ENCODE measurements at regions of chr7 and their contacts with region 1.

Region 1: GRCh38 chr7:39566023-39566921 is at the start of gene YAE1:
- DNase-seq: peak; percentile 63 to 81 (median 75)
- ATAC-seq: peak; percentile 95
- H3K4me3 ChIP-seq: peak within 1 kb of the TSS; percentile 88
- H3K4me3 Mint-ChIP-seq: peak within 1 kb of the TSS; percentile 98 to 100 (median 99)
- H3K27ac ChIP-seq: peak within 1 kb of the TSS; percentile 81
- H3K27ac Mint-ChIP-seq: peak within 1 kb of the TSS; percentile 93 to 99 (median 96)
- H3K4me1 ChIP-seq: peaks cover 7 to 11% of the 10 kb centered on the region in 2 donors
- H3K4me1 Mint-ChIP-seq: peaks cover 13 to 50% (median 25%) of the 10 kb centered on the region in 7 donors
- H3K27me3 ChIP-seq: no peaks in the 10 kb centered on the region
- H3K27me3 Mint-ChIP-seq: peaks cover 0 to 15% (median 0%) of the 10 kb centered on the region in 5 donors
- total RNA-seq, gene YAE1: 10.2 to 34.2 (median 15.3) TPM

Region 2: DNA sequence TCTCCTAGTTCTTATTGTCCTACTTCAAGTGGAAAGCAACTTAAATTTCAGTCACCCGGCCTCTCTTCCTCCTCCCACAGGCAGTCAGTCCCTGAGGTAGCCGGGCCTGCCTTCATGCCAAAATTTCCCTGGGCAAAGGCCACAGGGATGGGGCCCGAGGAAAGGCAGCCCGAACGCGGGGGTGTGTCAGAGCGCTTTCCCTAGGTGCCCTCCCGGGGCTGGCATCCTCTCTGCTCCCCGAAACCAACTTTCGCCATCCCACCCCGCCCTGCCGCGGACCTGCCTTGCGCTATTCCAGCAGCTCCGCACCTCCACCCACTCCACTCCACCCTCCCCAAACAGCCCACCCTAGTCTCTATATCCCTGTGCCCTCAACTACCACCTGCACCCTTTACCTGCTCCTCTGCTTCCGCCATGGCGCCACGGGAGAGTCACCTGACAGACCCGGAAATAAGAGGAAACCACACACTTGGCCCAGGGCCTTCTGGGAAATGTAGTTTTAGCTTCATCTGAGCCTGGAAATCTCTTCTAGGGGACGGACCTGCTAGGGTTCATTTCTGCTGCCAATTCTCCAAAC is 657.4 kb before region 1 on chr7 and contains the start of gene VPS41:
- CTCF ChIA-PET with region 1: no interaction called
- POLR2A ChIA-PET with region 1: no interaction called
- intact Hi-C with region 1: loop called (anchors 2 to 5 kb)
- DNase-seq: peak; percentile 42 to 89 (median 85)
- ATAC-seq: peak; percentile 99
- H3K4me3 ChIP-seq: peak within 1 kb of the TSS; percentile 79
- H3K4me3 Mint-ChIP-seq: peak within 1 kb of the TSS; percentile 92 to 99 (median 97)
- H3K27ac ChIP-seq: peak within 1 kb of the TSS; percentile 72
- H3K27ac Mint-ChIP-seq: peak within 1 kb of the TSS; percentile 82 to 97 (median 91)
- H3K4me1 ChIP-seq: peaks cover 3 to 7% of the 10 kb centered on the region in 2 donors
- H3K4me1 Mint-ChIP-seq: peaks cover 17 to 41% (median 37%) of the 10 kb centered on the region in 7 donors
- H3K27me3 ChIP-seq: no peaks in the 10 kb centered on the region
- H3K27me3 Mint-ChIP-seq: peaks cover 0 to 5% (median 0%) of the 10 kb centered on the region in 5 donors
- total RNA-seq, gene VPS41: 37.1 to 65.0 (median 64.5) TPM

Region 3: GRCh38 chr7:39539816-39540215 is 26.5 kb before region 1 on chr7:
- CTCF ChIA-PET with region 1: no interaction called
- POLR2A ChIA-PET with region 1: no interaction called
- intact Hi-C with region 1: no loop called
- DNase-seq: no peak
- ATAC-seq: no peak
- H3K4me3 ChIP-seq: no peak overlapping the region
- H3K4me3 Mint-ChIP-seq: no peak overlapping the region
- H3K27ac ChIP-seq: no peak overlapping the region
- H3K27ac Mint-ChIP-seq: no peak overlapping the region
- H3K4me1 ChIP-seq: no peaks in the 10 kb centered on the region
- H3K4me1 Mint-ChIP-seq: no peaks in the 10 kb centered on the region
- H3K27me3 ChIP-seq: no peaks in the 10 kb centered on the region
- H3K27me3 Mint-ChIP-seq: peaks cover 0 to 9% (median 6%) of the 10 kb centered on the region in 5 donors

Region 4: DNA sequence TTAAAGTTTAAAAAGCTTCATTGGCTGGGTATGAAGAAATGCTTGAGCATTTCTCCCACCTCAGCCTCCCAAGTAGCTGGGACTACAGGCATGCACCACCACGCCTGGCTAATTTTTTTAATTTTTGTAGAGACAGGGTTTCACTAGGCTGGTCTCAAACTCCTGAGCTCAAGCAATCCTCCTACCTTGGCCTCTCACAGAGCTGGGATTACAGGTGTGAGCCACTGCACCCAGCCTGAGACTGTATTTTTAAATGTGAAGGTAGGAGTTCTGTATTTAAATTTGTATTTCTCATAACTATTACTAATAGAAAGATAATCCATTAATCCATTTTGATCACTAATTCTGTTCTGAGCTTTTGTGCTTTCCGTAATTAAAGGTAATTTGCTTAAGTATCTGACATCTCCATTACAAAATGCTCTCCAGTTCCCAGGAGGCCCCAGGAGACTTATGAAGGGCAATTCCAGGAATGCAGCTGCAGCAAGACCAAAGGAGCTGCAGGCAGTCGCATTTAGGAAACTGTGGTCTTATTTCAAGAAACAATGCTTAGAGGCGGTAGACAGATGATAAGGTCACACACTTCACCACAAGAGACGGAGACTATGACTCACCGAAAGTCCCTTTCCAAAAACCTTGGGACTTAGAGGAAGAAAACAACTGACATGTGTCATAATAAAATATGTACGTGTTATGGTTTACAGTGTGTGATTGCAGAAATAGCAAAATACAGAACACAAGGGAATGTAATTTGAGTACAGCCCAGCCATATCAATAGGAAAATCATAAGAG is 23.2 kb after region 1 on chr7:
- CTCF ChIA-PET with region 1: no interaction called
- POLR2A ChIA-PET with region 1: no interaction called
- intact Hi-C with region 1: loop called in 1 of 2 experiments (anchors 1 kb)
- DNase-seq: peak in 8 of 9 donors; percentile 37 to 85 (median 60)
- ATAC-seq: peak; percentile 94
- H3K4me3 ChIP-seq: no peak overlapping the region
- H3K4me3 Mint-ChIP-seq: peak overlapping the region in 6 of 10 donors; percentile 19 to 78 (median 52)
- H3K27ac ChIP-seq: no peak overlapping the region
- H3K27ac Mint-ChIP-seq: peak overlapping the region in 8 of 9 donors; percentile 55 to 90 (median 77)
- H3K4me1 ChIP-seq: peaks cover 5 to 15% of the 10 kb centered on the region in 2 donors
- H3K4me1 Mint-ChIP-seq: peaks cover 10 to 54% (median 26%) of the 10 kb centered on the region in 7 donors
- H3K27me3 ChIP-seq: no peaks in the 10 kb centered on the region
- H3K27me3 Mint-ChIP-seq: no peaks in the 10 kb centered on the region

Region 5: DNA sequence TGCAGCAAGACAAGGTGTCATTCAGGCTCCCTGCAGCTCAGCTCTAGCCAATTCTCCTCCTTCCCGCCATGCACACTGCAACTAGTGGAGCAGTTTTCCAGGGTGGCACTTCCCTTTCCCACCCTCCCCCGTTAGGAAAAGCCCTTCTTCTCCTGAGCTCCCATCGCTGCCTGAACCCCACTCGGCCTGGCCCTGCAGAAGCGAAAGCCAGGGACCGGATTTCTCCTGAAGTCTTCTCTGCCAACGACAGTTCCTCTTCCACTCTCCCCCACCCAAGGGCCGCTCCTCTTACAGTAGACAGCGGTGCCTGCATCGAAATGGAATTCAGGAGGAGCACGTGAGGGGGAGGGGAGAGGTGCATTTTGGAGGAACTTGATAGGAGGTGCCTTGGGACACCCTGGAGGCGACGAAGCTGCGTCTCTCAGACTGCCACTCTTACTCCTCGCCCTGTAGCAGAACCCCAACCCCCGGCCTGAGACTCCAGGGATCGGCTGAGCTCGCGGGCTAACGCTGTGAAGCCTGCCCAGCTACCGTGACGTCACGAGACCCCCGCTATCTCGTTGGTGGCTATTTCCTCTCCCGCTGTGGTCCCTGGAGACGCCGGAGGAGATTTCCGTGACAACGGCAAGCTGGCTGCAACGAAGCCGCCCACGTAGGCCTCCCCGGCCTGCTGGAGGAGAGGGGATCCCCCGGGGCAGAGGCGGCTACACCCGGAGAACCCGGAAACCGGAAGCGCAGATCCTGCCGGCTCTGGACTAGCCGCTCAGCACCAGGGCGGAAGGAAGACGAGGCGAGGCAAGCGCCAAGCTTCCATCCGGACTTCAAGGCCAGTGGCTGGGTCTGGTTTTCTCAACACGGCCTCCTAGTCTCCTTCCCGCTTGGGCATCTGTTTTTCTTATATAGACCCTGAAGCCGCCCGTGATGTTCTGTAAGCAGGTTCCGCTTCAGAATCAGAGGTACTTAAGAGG is 166.8 kb after region 1 on chr7:
- CTCF ChIA-PET with region 1: no interaction called
- POLR2A ChIA-PET with region 1: interaction called, 3 read pairs
- intact Hi-C with region 1: loop called (anchors 1 kb)
- DNase-seq: peak; percentile 80 to 96 (median 91)
- ATAC-seq: peak; percentile 95
- H3K4me3 ChIP-seq: peak overlapping the region; percentile 83
- H3K4me3 Mint-ChIP-seq: peak overlapping the region; percentile 78 to 95 (median 92)
- H3K27ac ChIP-seq: peak overlapping the region; percentile 82
- H3K27ac Mint-ChIP-seq: peak overlapping the region; percentile 93 to 98 (median 96)
- H3K4me1 ChIP-seq: peaks cover 11 to 27% of the 10 kb centered on the region in 2 donors
- H3K4me1 Mint-ChIP-seq: peaks cover 13 to 46% (median 40%) of the 10 kb centered on the region in 7 donors
- H3K27me3 ChIP-seq: no peaks in the 10 kb centered on the region
- H3K27me3 Mint-ChIP-seq: peaks cover 0 to 9% (median 0%) of the 10 kb centered on the region in 5 donors

Region 6: DNA sequence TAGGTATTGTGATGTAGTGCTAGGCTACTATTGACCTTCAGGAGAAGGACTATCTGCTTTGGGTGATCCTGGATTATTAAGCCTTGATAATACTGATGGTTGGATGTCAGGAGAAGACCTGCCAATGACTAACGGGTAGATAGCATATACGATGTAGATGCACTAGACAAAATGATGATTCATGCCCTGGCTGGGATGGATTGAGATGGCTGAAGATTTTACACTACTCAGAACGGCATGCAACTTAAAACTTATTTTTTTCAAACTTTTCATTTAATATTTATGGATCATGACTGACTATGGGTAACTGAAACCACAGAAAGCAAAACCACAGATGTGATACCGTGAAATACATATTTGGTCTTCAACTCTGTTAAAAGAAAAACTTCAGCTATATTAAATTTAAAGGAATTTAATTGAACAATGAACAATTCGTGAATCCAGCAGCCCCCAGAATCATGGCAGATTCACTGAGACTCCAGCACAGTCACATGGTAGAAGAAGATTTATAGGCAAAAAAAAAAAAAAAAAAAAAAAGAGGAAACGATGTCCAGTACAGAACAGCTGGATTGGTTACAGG is 259.2 kb after region 1 on chr7:
- CTCF ChIA-PET with region 1: no interaction called
- POLR2A ChIA-PET with region 1: no interaction called
- intact Hi-C with region 1: no loop called
- DNase-seq: no peak
- ATAC-seq: no peak
- H3K4me3 ChIP-seq: no peak overlapping the region
- H3K4me3 Mint-ChIP-seq: no peak overlapping the region
- H3K27ac ChIP-seq: no peak overlapping the region
- H3K27ac Mint-ChIP-seq: no peak overlapping the region
- H3K4me1 ChIP-seq: no peaks in the 10 kb centered on the region
- H3K4me1 Mint-ChIP-seq: peaks cover 0 to 5% (median 0%) of the 10 kb centered on the region in 7 donors
- H3K27me3 ChIP-seq: peaks cover 0 to 4% of the 10 kb centered on the region in 2 donors
- H3K27me3 Mint-ChIP-seq: peaks cover 34 to 68% (median 44%) of the 10 kb centered on the region in 5 donors

Region 7: DNA sequence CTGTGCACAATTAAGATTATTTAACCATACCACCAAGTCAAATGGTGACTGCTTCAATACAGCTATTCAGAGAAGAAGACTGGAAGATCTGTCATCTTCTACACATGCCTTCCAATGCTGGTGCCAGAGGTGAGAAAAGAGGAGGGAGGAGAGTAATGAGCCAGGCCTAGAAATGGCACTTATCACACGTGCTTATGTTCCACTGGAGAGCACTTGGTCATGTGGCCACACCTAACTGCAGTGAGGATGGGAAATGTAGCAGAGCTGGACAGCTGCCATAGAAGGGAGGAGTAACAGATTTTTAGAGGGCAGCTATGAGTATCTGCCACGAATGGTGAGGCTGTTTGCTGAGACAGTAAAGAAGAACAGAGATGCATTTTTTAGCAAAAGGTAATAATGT is 491.0 kb after region 1 on chr7:
- CTCF ChIA-PET with region 1: no interaction called
- POLR2A ChIA-PET with region 1: no interaction called
- intact Hi-C with region 1: loop called in 1 of 2 experiments (anchors 5 kb)
- DNase-seq: no peak
- ATAC-seq: no peak
- H3K4me3 ChIP-seq: no peak overlapping the region
- H3K4me3 Mint-ChIP-seq: no peak overlapping the region
- H3K27ac ChIP-seq: no peak overlapping the region
- H3K27ac Mint-ChIP-seq: peak overlapping the region in 6 of 9 donors; percentile 14 to 69 (median 44)
- H3K4me1 ChIP-seq: no peaks in the 10 kb centered on the region
- H3K4me1 Mint-ChIP-seq: peaks cover 4 to 22% (median 13%) of the 10 kb centered on the region in 7 donors
- H3K27me3 ChIP-seq: no peaks in the 10 kb centered on the region
- H3K27me3 Mint-ChIP-seq: no peaks in the 10 kb centered on the region